IMR-90 (cell line): ENCODE measurements at regions of chr7 and their contacts with region 1.

Region 1: DNA sequence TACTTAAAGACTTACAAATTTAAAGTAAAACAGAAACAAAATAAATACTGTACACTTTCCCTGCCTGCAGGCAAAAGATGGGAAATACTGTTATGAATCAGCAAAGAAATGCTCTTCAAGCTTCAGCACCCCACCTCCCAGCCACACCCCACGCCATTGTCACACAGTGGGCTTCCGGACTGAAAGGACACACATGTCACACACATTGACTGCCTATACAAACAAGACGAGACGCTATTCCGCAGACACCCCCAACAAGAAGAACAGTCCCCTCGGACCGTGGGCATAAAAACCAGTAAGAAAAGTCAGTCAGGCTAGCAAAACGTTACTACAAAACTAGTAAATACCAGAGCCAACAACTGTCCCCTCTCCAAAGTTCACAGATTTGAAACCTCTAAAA is 22.2 kb upstream of the PARP12 start:
- DNase-seq: no peak
- ATAC-seq: no peak
- H3K4me3 ChIP-seq: no peak overlapping the region
- H3K27ac ChIP-seq: no peak overlapping the region
- H3K4me1 ChIP-seq: no peaks in the 10 kb centered on the region
- H3K27me3 ChIP-seq: no peaks in the 10 kb centered on the region; the same call in 1 of the 2 replicates
- CTCF ChIP-seq: no peak
- POLR2A ChIP-seq: no peak
- RAD21 ChIP-seq: no peak

Region 2: GRCh38 chr7:139570119-139570518 is 514.9 kb before region 1 on chr7:
- CTCF ChIA-PET with region 1: no interaction called
- POLR2A ChIA-PET with region 1: interaction called, 11 read pairs
- dilution Hi-C with region 1: no loop called
- in situ Hi-C with region 1: no loop called
- intact Hi-C with region 1: no loop called
- DNase-seq: no peak
- ATAC-seq: no peak
- H3K4me3 ChIP-seq: no peak overlapping the region
- H3K27ac ChIP-seq: no peak overlapping the region
- H3K4me1 ChIP-seq: peaks cover 2% of the 10 kb centered on the region; the same call in 1 of the 2 replicates
- H3K27me3 ChIP-seq: no peaks in the 10 kb centered on the region
- CTCF ChIP-seq: 0 out of 2 replicates have a peak, but pooled peaks have one; percentile 8
- POLR2A ChIP-seq: no peak
- RAD21 ChIP-seq: no peak

Region 3: GRCh38 chr7:140121326-140121725 is 36.4 kb after region 1 on chr7:
- CTCF ChIA-PET with region 1: no interaction called
- POLR2A ChIA-PET with region 1: no interaction called
- dilution Hi-C with region 1: no loop called
- in situ Hi-C with region 1: no loop called
- intact Hi-C with region 1: loop called (anchors 5 kb)
- DNase-seq: no peak
- ATAC-seq: no peak
- H3K4me3 ChIP-seq: no peak overlapping the region
- H3K27ac ChIP-seq: no peak overlapping the region
- H3K4me1 ChIP-seq: no peaks in the 10 kb centered on the region
- H3K27me3 ChIP-seq: no peaks in the 10 kb centered on the region
- CTCF ChIP-seq: no peak
- POLR2A ChIP-seq: no peak
- RAD21 ChIP-seq: no peak

Region 4: DNA sequence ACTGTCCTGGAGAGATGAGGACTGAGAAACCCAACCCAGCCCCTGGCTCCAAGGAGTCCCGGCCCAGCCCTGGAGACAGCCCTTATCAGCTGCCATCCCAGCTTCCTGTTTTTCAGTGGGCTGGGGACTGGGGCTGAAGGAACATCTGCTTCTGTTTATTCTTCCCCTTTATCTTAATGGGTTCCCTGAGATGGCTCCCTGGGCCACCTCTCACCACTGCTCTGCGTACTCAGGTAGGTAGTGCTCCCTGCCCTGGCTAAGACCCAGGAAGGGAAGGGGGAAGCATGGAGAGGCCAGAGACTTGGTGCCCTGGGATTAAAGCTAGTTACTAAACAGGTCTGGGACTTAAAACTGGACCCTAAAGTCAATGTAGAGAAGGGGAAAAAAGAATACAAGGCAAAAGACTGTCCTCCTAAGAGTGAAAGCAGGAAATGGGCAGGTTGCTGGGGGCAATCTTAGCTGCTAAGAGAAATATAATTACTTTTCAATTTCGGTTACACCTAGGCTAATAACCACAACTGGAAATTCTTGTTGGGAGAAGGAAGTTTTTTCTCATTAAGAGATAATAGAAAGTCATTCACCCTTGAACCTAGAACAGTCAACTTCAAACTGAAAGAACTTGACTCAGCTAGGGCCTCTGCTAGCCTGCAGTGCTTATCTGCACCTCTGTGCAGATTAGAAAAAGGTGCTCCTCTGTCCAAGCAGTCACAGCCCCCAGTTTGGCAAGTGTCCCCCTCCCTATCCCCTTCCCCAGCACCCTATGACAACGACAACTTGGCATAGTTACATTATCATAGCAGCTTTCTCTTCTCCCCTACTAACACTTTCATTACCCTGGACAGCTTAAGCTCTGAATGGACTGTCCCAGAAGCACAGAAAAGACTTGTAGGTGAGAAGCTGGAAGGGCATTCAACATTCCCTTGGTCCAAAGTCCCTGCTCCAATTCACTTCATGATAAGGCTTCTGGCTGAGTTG is 157.4 kb after region 1 on chr7:
- CTCF ChIA-PET with region 1: no interaction called
- POLR2A ChIA-PET with region 1: no interaction called
- dilution Hi-C with region 1: no loop called
- in situ Hi-C with region 1: no loop called
- intact Hi-C with region 1: no loop called
- DNase-seq: no peak
- ATAC-seq: no peak
- H3K4me3 ChIP-seq: no peak overlapping the region
- H3K27ac ChIP-seq: no peak overlapping the region
- H3K4me1 ChIP-seq: no peaks in the 10 kb centered on the region
- H3K27me3 ChIP-seq: peaks cover 39% of the 10 kb centered on the region
- CTCF ChIP-seq: no peak
- POLR2A ChIP-seq: no peak
- RAD21 ChIP-seq: no peak

Region 5: DNA sequence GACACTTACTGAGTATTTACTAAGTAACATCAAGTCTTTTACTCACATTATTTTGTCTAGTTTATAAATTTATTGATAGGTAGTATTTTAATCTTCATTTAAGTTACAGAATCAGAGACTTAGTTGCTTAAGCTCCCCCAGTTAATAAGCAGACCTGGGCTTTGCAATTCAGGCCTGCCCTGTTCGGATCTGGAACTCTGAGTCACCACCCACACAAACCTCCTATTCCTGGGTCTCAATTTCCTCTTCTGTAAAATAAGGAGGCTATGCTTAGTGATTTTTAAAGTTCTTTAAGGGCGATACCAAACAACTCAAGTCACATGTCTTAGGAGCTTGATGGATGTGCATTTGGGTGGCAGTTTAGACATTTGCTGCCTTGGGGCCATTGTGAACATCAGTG is 1907.2 kb after region 1 on chr7:
- CTCF ChIA-PET with region 1: no interaction called
- POLR2A ChIA-PET with region 1: no interaction called
- dilution Hi-C with region 1: no loop called
- in situ Hi-C with region 1: no loop called
- intact Hi-C with region 1: no loop called
- DNase-seq: no peak
- ATAC-seq: no peak
- H3K4me3 ChIP-seq: no peak overlapping the region
- H3K27ac ChIP-seq: no peak overlapping the region
- H3K4me1 ChIP-seq: no peaks in the 10 kb centered on the region
- H3K27me3 ChIP-seq: no peaks in the 10 kb centered on the region
- CTCF ChIP-seq: no peak
- POLR2A ChIP-seq: no peak
- RAD21 ChIP-seq: no peak